ENCODE measurements at regions of chr14 and their contacts with region 1.

Region 1: GRCh38 chr14:33914676-33915516 is 36.0 kb downstream of the EGLN3 start:
- DNase-seq: no peak
- H3K4me3 ChIP-seq: no peak overlapping the region
- H3K27ac ChIP-seq: no peak overlapping the region
- H3K4me1 ChIP-seq: peaks cover 2% of the 10 kb centered on the region
- H3K27me3 ChIP-seq: no peaks in the 10 kb centered on the region
- CTCF ChIP-seq: no peak
- EP300 ChIP-seq: no peak
- POLR2A ChIP-seq: no peak

Region 2: GRCh38 chr14:33386781-33387180 is 528.1 kb before region 1 on chr14:
- intact Hi-C with region 1: no loop called
- DNase-seq: no peak
- H3K4me3 ChIP-seq: no peak overlapping the region
- H3K27ac ChIP-seq: no peak overlapping the region
- H3K4me1 ChIP-seq: no peaks in the 10 kb centered on the region
- H3K27me3 ChIP-seq: no peaks in the 10 kb centered on the region
- CTCF ChIP-seq: no peak
- EP300 ChIP-seq: no peak
- POLR2A ChIP-seq: no peak

Region 3: DNA sequence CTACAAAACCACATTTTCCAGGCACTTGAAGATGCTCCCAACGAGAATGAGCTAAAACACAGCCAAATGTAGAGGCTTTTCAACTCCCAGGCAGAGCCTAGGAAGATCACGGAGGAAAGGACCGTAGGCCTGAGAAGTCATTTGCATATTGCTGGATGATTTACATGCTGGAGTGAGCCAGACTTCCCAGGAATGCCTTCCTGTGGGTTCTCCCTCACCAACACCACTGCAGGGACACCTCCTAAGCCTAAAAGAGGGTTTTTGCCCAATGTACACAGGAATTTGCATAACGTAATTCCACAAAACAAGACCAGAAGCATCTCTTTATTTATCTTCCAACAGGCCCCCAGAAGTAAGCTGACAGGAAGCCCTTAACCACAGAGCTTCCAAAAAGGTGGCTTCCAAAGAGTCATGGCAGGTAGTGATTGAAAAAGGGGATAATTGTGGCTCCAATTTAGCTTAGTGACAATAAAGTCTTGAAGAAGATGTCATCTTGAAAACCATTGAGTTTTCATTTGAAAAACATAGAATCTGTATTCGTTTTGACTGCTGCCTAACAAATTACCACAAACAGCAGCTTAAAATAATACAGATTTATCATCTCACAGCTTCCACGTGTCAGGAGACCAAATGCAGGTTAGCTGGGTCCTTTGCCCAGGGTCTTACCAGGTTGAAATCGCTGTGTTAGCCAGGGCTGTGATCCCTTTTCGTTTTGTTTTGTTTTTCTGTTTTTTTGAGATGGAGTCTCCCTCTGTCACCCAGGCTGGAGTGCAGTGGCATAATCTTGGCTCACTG is 80.2 kb before region 1 on chr14:
- intact Hi-C with region 1: no loop called
- DNase-seq: no peak
- H3K4me3 ChIP-seq: no peak overlapping the region
- H3K27ac ChIP-seq: no peak overlapping the region
- H3K4me1 ChIP-seq: no peaks in the 10 kb centered on the region
- H3K27me3 ChIP-seq: no peaks in the 10 kb centered on the region
- CTCF ChIP-seq: no peak
- EP300 ChIP-seq: no peak
- POLR2A ChIP-seq: no peak

Region 4: GRCh38 chr14:34003691-34004090 is 88.8 kb after region 1 on chr14:
- intact Hi-C with region 1: loop called in 1 of 4 experiments (anchors 10 kb)
- DNase-seq: no peak
- H3K4me3 ChIP-seq: no peak overlapping the region
- H3K27ac ChIP-seq: no peak overlapping the region
- H3K4me1 ChIP-seq: no peaks in the 10 kb centered on the region
- H3K27me3 ChIP-seq: no peaks in the 10 kb centered on the region
- CTCF ChIP-seq: no peak
- EP300 ChIP-seq: no peak
- POLR2A ChIP-seq: no peak

Region 5: DNA sequence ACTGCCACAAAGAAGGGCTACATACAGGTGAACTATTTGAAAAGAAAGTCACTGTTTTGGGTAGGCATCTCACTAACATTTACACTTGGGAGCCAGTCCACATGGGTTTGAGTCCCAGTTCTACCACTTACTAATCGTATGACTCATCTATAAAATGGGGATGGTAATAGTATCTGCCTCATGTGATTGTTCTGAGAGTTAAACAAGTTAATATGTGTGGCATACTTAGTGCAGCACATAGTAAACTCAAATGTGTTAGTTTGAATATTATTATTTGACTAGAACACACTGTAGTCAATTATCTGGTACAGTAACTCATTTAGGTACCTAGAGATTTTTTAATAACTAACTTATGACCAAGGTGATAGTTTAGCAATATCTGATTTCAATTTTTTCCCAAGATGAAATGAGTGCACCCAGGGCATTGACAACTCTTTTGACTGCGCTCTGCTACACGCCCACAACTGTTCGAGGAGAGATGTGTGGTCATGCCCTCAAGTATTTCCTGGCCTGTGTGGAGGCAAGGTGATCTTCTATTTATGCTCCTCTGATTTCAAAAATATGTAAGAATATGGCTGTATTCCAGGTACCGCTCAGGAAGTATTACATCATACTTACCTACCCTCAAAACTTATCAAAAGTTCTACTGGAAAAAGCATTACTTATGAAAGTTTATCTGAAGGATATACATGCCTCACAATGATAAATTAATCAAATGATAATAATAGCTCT is 246.6 kb after region 1 on chr14:
- intact Hi-C with region 1: no loop called
- DNase-seq: no peak
- H3K4me3 ChIP-seq: no peak overlapping the region
- H3K27ac ChIP-seq: no peak overlapping the region
- H3K4me1 ChIP-seq: no peaks in the 10 kb centered on the region
- H3K27me3 ChIP-seq: no peaks in the 10 kb centered on the region
- CTCF ChIP-seq: no peak
- EP300 ChIP-seq: no peak
- POLR2A ChIP-seq: no peak

Measured in ovary (tissue), 10 donors.